Activated CD4-positive, alpha-beta memory T cell treated with anti-CD3 and anti-CD28 coated beads for 36 hours (primary cell): ENCODE measurements at regions of chr9 and their contacts with region 1.

Region 1: GRCh38 chr9:77456829-77457437 is 191.2 kb downstream of the GNA14 start:
- DNase-seq: peak; percentile 91
- H3K4me3 Mint-ChIP-seq: no peak overlapping the region
- H3K27ac Mint-ChIP-seq: no peak overlapping the region
- H3K4me1 Mint-ChIP-seq: peaks cover 13% of the 10 kb centered on the region
- H3K27me3 Mint-ChIP-seq: no peaks in the 10 kb centered on the region

Region 2: GRCh38 chr9:76502746-76503145 is 954.2 kb before region 1 on chr9:
- CTCF ChIA-PET with region 1: no interaction called
- POLR2A ChIA-PET with region 1: no interaction called
- intact Hi-C with region 1: no loop called
- DNase-seq: no peak
- H3K4me3 Mint-ChIP-seq: no peak overlapping the region
- H3K27ac Mint-ChIP-seq: no peak overlapping the region
- H3K4me1 Mint-ChIP-seq: no peaks in the 10 kb centered on the region
- H3K27me3 Mint-ChIP-seq: no peaks in the 10 kb centered on the region

Region 3: DNA sequence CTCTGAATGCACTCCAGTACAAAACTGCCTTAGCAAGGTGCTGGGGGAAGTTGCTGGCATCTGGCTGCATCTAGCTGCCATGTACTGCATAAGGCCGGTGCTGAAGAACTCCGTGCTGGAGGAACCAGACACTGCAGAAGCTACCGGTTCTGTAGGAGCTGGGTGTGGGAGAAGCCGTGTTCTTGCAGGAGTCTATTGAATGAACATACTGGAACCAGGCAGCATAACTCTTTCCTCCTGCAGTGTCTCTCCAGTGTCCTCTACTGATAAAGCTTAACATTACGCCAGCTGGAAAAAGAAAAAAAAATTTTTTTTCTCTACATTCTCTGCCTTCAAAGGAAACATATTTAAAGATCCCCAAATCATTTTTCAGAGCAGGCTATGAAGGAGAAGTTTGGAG is 241.1 kb before region 1 on chr9:
- CTCF ChIA-PET with region 1: no interaction called
- POLR2A ChIA-PET with region 1: no interaction called
- intact Hi-C with region 1: no loop called
- DNase-seq: no peak
- H3K4me3 Mint-ChIP-seq: no peak overlapping the region
- H3K27ac Mint-ChIP-seq: no peak overlapping the region
- H3K4me1 Mint-ChIP-seq: no peaks in the 10 kb centered on the region
- H3K27me3 Mint-ChIP-seq: no peaks in the 10 kb centered on the region

Region 4: GRCh38 chr9:77424993-77425392 is 31.9 kb before region 1 on chr9:
- CTCF ChIA-PET with region 1: interaction called, 11 read pairs
- POLR2A ChIA-PET with region 1: no interaction called
- intact Hi-C with region 1: no loop called
- DNase-seq: no peak
- H3K4me3 Mint-ChIP-seq: no peak overlapping the region
- H3K27ac Mint-ChIP-seq: no peak overlapping the region
- H3K4me1 Mint-ChIP-seq: no peaks in the 10 kb centered on the region
- H3K27me3 Mint-ChIP-seq: no peaks in the 10 kb centered on the region

Region 5: GRCh38 chr9:77469515-77470231 is 12.7 kb after region 1 on chr9:
- CTCF ChIA-PET with region 1: interaction called, 30 read pairs
- POLR2A ChIA-PET with region 1: no interaction called
- intact Hi-C with region 1: no loop called
- DNase-seq: no peak
- H3K4me3 Mint-ChIP-seq: no peak overlapping the region
- H3K27ac Mint-ChIP-seq: no peak overlapping the region
- H3K4me1 Mint-ChIP-seq: peaks cover under 1% of the 10 kb centered on the region
- H3K27me3 Mint-ChIP-seq: peaks cover 4% of the 10 kb centered on the region

Region 6: DNA sequence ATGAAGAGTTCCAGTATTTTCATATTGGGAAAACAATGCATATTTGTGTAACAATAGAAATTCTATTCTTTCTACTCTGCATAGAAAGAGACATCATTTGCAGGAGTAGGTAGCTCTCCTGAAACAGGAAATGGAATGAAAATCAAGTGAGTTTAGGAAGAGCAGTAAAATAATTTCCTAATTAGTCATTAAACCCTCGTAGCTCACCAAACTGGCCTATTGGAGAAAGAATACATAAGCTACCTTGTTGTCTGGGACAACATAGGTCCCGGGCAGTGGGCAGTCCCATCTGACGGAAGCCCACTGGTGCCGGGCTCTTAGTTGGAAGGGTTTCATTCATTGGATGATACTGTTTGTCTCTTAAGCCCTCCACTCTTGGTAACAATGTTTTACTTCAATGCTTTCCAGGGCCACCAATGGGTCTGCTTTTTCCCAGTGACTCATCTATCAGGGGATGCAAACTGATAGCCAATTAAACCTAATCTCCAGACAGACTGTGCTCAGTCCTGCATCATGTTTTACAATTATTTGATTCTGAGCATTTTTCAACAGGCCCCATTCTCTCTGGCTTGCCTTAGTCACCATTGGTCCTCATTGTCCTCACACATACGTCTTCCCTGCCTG is 144.7 kb after region 1 on chr9:
- CTCF ChIA-PET with region 1: no interaction called
- POLR2A ChIA-PET with region 1: no interaction called
- intact Hi-C with region 1: no loop called
- DNase-seq: no peak
- H3K4me3 Mint-ChIP-seq: no peak overlapping the region
- H3K27ac Mint-ChIP-seq: no peak overlapping the region
- H3K4me1 Mint-ChIP-seq: no peaks in the 10 kb centered on the region
- H3K27me3 Mint-ChIP-seq: peaks cover 10% of the 10 kb centered on the region

Region 7: GRCh38 chr9:77648234-77649120 is 191.5 kb after region 1 on chr9 and contains the start of gene GNA14:
- CTCF ChIA-PET with region 1: interaction called, 5 read pairs
- POLR2A ChIA-PET with region 1: no interaction called
- intact Hi-C with region 1: loop called (anchors 5 kb)
- DNase-seq: peak; percentile 18
- H3K4me3 Mint-ChIP-seq: peak within 1 kb of the TSS; percentile 65
- H3K27ac Mint-ChIP-seq: no peak within 1 kb of the TSS
- H3K4me1 Mint-ChIP-seq: peaks cover 14% of the 10 kb centered on the region
- H3K27me3 Mint-ChIP-seq: peaks cover 35% of the 10 kb centered on the region
- total RNA-seq, gene GNA14: not detected

Region 8: DNA sequence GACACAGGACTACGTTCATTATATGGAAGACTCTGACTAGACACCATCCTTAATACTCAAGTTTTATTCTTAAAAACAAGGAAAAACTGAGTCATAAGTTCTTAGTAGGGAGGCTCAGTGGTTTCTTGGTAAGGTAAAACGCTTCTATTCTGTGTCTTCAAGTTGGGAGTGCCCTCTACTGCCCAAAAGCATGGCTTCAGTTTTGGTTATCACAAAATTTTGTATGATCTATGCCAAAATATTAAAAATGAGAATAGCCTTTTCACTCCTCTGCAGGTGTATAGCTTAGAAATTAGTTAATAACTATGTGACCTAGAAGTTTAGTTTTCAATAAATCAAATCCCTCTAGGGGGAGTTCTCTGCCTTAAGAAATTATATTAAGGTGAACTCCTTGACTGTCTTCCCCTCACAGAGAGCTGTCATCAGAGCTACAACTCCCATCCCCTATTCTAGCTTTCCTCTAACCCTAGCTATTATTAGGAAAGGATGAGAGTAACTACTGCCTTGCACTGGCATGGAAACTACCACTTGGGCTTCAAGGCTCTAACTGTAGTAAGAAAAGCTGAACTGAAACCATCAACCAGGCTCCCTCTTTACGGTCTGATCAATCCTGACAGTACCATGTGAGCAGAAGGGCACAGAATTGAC is 384.9 kb after region 1 on chr9:
- CTCF ChIA-PET with region 1: interaction called, 15 read pairs
- POLR2A ChIA-PET with region 1: no interaction called
- intact Hi-C with region 1: loop called (anchors 10 kb)
- DNase-seq: peak; percentile 19
- H3K4me3 Mint-ChIP-seq: no peak overlapping the region
- H3K27ac Mint-ChIP-seq: no peak overlapping the region
- H3K4me1 Mint-ChIP-seq: peaks cover 27% of the 10 kb centered on the region
- H3K27me3 Mint-ChIP-seq: no peaks in the 10 kb centered on the region